Activated T-helper 2 cell treated with anti-CD3 and anti-CD28 coated beads, Interferon-gamma antibody, Interleukin-2, Interleukin-4, amounts not matched to agents 10 μg/mL and 5 μg/mL and 100 μg/mL, durations not matched to agents 14 hours and 24 hours and 36 hours (primary cell): ENCODE measurements at regions of chr7 and their contacts with region 1.

Region 1: DNA sequence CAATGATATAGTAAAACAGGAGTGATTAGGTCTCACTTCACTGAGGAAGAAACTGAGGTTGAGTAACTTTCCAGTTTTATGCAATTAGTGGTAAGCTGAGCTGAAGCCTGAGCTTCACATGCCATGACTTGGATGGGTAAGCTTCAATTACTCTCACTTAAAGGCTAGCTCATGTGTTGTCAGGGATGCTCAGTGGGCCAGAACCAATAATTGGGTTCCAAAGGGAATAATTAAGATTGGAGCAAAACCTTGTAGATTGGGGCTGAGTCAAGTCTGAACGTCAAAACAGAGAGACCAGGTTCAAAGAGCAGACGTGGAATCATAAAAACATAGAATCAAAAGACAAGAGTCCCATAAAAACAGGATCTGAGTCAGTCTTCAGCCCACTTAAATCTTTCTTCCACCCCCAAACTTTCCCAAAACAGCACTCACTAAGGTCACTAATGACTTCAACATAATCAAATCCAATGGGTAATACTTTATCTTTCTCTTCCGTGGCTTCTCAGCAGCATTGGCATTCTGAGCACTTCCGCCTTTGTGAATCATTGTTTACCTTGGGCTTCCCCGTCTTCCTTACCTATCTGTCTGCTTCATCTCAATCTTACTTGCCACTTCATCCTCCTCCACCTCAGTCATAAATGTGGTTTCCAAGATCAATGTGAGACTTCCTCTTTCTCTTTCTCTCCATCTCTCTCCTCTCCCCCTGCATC is 23.0 kb upstream of the EGFR start:
- DNase-seq: peak; percentile 17
- H3K4me3 Mint-ChIP-seq: peak overlapping the region; percentile 3
- H3K27ac Mint-ChIP-seq: peak overlapping the region; percentile 78
- H3K4me1 Mint-ChIP-seq: peaks cover 28% of the 10 kb centered on the region
- H3K27me3 Mint-ChIP-seq: peaks cover 12% of the 10 kb centered on the region

Region 2: DNA sequence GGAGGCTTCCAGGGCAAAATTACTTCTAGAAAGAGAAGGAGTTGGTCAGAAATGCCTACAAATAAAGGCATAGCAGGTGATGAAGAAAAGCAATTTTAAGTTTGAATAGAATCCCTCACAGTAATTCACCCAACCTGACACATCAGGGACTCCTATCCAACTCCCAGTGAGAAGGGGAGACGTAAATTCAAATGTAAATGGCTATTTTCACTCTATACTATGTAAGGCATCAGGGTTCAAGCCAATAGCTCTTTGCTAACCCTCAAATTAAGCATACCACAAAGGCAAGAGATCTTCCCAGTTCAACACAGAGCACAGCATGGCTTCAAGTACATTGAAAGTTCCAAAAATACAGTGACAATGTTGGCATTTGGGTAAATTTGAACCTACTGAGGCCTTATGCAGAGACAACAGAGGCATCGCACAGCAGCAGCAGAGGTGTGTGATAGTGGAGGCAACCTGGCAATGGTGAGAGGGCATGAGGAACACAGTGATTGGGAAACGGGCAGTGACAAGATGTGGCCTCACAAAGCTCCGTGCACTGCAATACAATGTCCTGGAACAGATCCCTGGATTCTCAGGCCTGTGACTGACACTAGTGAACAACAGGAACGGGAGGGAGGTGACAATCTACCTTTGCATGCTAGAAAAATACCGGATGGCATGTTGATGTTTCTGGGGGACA is 357.9 kb before region 1 on chr7:
- intact Hi-C with region 1: no loop called
- DNase-seq: no peak
- H3K4me3 Mint-ChIP-seq: no peak overlapping the region
- H3K27ac Mint-ChIP-seq: no peak overlapping the region
- H3K4me1 Mint-ChIP-seq: no peaks in the 10 kb centered on the region
- H3K27me3 Mint-ChIP-seq: no peaks in the 10 kb centered on the region

Region 3: GRCh38 chr7:54888067-54888733 is 107.6 kb before region 1 on chr7:
- intact Hi-C with region 1: no loop called
- DNase-seq: no peak
- H3K4me3 Mint-ChIP-seq: no peak overlapping the region
- H3K27ac Mint-ChIP-seq: no peak overlapping the region
- H3K4me1 Mint-ChIP-seq: no peaks in the 10 kb centered on the region
- H3K27me3 Mint-ChIP-seq: peaks cover 16% of the 10 kb centered on the region

Region 4: GRCh38 chr7:55073945-55074499 is 78.2 kb after region 1 on chr7:
- intact Hi-C with region 1: loop called (anchors 1 kb)
- DNase-seq: peak; percentile 46
- H3K4me3 Mint-ChIP-seq: peak overlapping the region; percentile 4
- H3K27ac Mint-ChIP-seq: peak overlapping the region; percentile 25
- H3K4me1 Mint-ChIP-seq: peaks cover 14% of the 10 kb centered on the region
- H3K27me3 Mint-ChIP-seq: peaks cover 16% of the 10 kb centered on the region

Region 5: GRCh38 chr7:55132890-55133551 is 137.2 kb after region 1 on chr7:
- intact Hi-C with region 1: loop called (anchors 2 kb)
- DNase-seq: no peak
- H3K4me3 Mint-ChIP-seq: no peak overlapping the region
- H3K27ac Mint-ChIP-seq: peak overlapping the region; percentile 28
- H3K4me1 Mint-ChIP-seq: peaks cover 27% of the 10 kb centered on the region
- H3K27me3 Mint-ChIP-seq: peaks cover 21% of the 10 kb centered on the region

Region 6: DNA sequence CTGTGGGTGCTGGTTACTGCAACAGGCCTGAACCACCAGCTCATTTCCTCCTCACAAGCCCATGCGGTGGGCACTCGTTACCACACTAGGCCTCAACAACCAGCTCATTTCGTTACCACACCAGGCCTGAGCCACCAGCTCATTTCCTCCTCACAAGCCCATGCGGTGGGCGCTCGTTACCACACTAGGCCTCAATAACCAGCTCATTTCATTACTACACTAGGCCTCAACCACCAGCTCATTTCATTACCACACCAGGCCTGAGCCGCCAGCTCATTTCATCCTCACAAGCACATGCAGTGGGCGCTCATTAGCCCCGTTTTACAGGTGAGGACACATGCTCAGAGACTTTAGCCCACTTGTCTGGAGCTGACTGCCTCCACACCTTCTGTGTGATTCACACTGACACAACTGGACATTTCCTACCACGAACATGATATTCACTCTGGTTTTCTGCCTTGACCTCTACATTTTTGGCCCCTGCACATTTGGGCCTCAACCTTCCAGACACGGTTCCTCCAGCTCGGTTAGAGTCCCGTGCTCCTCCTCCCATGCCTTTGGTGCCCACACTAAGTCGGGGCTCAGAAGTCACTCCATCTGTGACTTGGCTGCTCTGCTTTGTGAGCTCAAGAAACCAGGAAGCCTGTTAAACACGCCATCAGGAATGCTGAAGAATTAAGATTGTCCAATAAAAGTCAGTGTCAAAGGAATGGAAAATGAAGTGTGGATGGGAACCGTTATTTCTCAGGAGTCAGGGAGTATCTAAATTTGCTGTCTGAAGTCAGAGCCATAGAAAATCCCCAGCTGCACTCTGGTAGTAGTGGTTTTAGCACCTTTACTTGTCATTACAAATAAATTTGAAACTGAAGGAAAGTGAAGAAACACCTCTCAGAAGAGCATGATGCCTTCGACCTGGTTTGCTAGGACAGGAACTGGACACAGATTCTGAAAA is 313.5 kb after region 1 on chr7:
- intact Hi-C with region 1: loop called (anchors 1 kb)
- DNase-seq: peak; percentile 60
- H3K4me3 Mint-ChIP-seq: no peak overlapping the region
- H3K27ac Mint-ChIP-seq: peak overlapping the region; percentile 60
- H3K4me1 Mint-ChIP-seq: peaks cover 31% of the 10 kb centered on the region
- H3K27me3 Mint-ChIP-seq: peaks cover 11% of the 10 kb centered on the region